ENCODE measurements at regions of chr11 and their contacts with region 1.

Region 1: DNA sequence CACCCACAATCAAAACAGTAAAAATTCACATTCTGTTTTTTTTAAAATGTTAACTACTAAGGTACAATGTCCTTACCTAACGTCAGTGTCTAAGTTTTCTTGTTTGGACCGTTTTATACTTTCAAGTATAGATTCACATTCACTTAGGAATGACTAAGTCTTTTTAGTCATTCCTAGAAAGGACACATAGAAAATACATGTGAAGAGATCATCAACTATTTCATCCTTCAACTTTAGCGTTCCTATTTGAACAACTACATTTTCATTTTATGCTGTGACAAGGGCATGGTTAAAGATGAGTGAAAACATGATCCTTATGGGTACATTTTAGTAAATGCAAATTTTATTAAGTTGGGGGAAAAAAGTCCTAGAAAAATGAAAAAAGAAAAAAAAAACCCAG is 62.8 kb downstream of the DDX10 start:
- DNase-seq: no peak
- CTCF ChIP-seq: no peak

Region 2: DNA sequence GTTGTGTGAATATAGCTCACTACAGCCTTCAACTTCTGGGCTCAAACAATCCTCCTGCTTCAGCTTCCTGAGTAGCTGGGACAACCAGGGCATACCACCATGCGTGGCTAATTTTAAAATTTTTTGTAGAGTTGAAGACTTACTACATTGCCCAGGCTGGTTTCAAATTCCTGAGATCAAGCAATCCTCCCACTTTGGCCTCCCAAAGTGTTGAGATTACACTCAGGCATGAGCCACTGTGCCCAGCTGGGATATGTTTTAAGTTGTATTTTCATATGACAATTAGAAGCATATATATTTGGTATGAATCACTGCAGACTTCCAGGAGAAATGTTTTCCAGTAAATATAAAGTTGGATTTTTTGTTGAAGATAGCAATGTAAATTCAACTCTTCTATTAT is 47.4 kb before region 1 on chr11:
- CTCF ChIA-PET with region 1: no interaction called
- POLR2A ChIA-PET with region 1: no interaction called
- DNase-seq: no peak
- CTCF ChIP-seq: no peak

Region 3: DNA sequence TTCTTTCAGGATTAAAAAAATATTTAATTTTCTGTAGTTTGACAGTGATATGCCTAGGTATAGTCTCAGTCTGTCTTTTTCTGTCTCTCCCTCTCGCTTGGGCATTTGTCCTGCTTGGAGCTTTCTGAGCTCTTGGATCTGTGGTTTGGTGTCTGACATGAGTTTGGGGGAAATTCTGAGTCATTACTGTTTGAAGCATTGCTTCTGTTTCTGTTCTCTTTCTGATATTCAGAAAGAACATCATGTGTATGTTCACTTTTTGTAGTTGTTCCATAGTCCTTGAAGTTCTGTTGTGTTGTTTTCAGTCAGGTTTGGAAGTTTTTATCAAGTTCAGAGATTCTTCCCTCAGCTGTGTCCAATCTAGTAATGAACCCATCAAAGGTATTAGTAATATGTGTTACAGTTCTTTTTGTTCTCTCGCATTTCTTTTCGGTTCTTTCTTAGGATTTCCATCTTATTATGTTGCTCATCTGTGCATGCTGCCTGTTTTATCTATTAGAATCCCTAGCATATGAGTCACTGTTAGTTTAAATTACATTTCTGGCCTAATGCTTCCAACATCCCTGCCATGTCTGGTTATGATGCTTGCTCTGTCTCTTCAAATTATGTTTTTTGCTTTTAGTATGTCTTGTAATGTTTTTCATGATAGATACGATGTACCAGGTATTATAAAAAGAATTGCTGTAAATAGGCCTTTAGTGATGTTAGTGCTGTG is 14.4 kb before region 1 on chr11:
- CTCF ChIA-PET with region 1: interaction called, 17 read pairs
- POLR2A ChIA-PET with region 1: no interaction called
- DNase-seq: peak; percentile 29
- CTCF ChIP-seq: no peak

Region 4: GRCh38 chr11:108780119-108780518 is 52.5 kb after region 1 on chr11:
- CTCF ChIA-PET with region 1: no interaction called
- POLR2A ChIA-PET with region 1: no interaction called
- DNase-seq: no peak
- CTCF ChIP-seq: no peak

Region 5: GRCh38 chr11:108887436-108888238 is 160.0 kb after region 1 on chr11:
- CTCF ChIA-PET with region 1: no interaction called
- POLR2A ChIA-PET with region 1: no interaction called
- DNase-seq: no peak
- CTCF ChIP-seq: no peak